IMR-90 (cell line): ENCODE measurements at regions of chr21 and their contacts with region 1.

Region 1: GRCh38 chr21:25607151-25608043 is at the start of gene MRPL39:
- DNase-seq: peak; percentile 88
- ATAC-seq: peak; percentile 98
- H3K4me3 ChIP-seq: peak within 1 kb of the TSS; percentile 81
- H3K27ac ChIP-seq: peak within 1 kb of the TSS; percentile 70
- H3K4me1 ChIP-seq: no peaks in the 10 kb centered on the region
- H3K27me3 ChIP-seq: no peaks in the 10 kb centered on the region
- CTCF ChIP-seq: peak; percentile 68
- POLR2A ChIP-seq: peak; percentile 75
- RAD21 ChIP-seq: peak; percentile 50
- total RNA-seq, gene MRPL39: 20.6 and 40.0 TPM in 2 replicates

Region 2: GRCh38 chr21:25421327-25422028 is 185.9 kb before region 1 on chr21:
- CTCF ChIA-PET with region 1: no interaction called
- POLR2A ChIA-PET with region 1: no interaction called
- dilution Hi-C with region 1: no loop called
- in situ Hi-C with region 1: no loop called
- intact Hi-C with region 1: loop called (anchors 2 kb)
- DNase-seq: peak; percentile 68
- ATAC-seq: peak; percentile 87
- H3K4me3 ChIP-seq: no peak overlapping the region
- H3K27ac ChIP-seq: no peak overlapping the region
- H3K4me1 ChIP-seq: no peaks in the 10 kb centered on the region
- H3K27me3 ChIP-seq: peaks cover 4% of the 10 kb centered on the region
- CTCF ChIP-seq: peak; percentile 61
- POLR2A ChIP-seq: no peak
- RAD21 ChIP-seq: peak; percentile 64

Region 3: DNA sequence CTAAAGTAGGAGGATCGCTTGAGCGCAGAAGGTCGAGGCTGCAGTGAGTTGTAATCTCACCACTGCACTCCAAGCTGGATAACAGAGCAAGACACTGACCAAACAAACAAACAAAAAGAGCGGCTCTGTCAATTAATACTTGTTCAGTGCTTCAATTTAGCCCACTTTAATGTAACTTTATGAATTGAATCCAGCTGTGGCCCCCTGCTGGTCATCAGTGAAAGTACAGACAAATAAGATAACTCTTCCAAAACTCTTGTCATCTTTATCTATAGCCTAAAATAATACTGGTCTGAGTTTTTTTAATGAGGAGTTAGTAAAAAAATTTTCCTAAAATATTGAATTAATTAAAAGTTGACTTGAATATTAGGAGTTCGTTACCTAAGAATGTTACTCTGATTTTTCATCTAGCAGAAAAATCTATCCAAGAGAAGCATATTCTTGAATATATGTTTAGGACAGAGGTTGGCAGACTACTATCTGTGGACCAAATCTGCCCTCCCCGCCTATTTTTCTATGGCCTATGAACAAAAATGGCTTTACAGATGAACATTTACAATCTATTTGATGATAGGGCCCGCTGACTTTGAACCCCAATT is 101.2 kb after region 1 on chr21:
- CTCF ChIA-PET with region 1: interaction called, 3 read pairs
- POLR2A ChIA-PET with region 1: no interaction called
- dilution Hi-C with region 1: no loop called
- in situ Hi-C with region 1: loop called (anchors 5 kb)
- intact Hi-C with region 1: loop called (anchors 1 kb)
- DNase-seq: peak; percentile 56
- ATAC-seq: peak; percentile 72
- H3K4me3 ChIP-seq: no peak overlapping the region
- H3K27ac ChIP-seq: no peak overlapping the region
- H3K4me1 ChIP-seq: no peaks in the 10 kb centered on the region
- H3K27me3 ChIP-seq: no peaks in the 10 kb centered on the region
- CTCF ChIP-seq: peak; percentile 73
- POLR2A ChIP-seq: no peak
- RAD21 ChIP-seq: peak; percentile 58

Region 4: DNA sequence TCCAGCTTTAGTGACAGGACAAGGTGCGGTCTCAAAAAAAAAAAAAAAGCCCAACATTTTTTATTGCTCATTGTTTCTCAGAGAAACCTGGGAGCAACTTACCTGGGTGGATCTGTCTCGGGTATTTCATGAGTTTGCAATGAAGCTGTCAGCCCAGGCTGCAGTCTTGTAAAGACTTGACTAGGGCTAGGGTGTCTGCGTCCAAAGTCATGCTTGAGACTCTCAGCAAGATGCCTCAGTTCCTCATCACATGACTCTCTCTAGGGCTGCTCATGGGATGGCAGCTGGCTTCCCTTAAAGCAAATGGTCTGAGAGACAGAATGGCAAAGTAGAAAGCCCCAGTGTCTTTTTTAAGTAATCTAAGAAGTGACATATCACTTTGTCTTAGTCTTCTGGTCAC is 135.5 kb after region 1 on chr21:
- CTCF ChIA-PET with region 1: no interaction called
- POLR2A ChIA-PET with region 1: no interaction called
- dilution Hi-C with region 1: no loop called
- in situ Hi-C with region 1: no loop called
- intact Hi-C with region 1: no loop called
- DNase-seq: no peak
- ATAC-seq: no peak
- H3K4me3 ChIP-seq: no peak overlapping the region
- H3K27ac ChIP-seq: no peak overlapping the region
- H3K4me1 ChIP-seq: no peaks in the 10 kb centered on the region
- H3K27me3 ChIP-seq: no peaks in the 10 kb centered on the region
- CTCF ChIP-seq: no peak
- POLR2A ChIP-seq: no peak
- RAD21 ChIP-seq: no peak

Region 5: DNA sequence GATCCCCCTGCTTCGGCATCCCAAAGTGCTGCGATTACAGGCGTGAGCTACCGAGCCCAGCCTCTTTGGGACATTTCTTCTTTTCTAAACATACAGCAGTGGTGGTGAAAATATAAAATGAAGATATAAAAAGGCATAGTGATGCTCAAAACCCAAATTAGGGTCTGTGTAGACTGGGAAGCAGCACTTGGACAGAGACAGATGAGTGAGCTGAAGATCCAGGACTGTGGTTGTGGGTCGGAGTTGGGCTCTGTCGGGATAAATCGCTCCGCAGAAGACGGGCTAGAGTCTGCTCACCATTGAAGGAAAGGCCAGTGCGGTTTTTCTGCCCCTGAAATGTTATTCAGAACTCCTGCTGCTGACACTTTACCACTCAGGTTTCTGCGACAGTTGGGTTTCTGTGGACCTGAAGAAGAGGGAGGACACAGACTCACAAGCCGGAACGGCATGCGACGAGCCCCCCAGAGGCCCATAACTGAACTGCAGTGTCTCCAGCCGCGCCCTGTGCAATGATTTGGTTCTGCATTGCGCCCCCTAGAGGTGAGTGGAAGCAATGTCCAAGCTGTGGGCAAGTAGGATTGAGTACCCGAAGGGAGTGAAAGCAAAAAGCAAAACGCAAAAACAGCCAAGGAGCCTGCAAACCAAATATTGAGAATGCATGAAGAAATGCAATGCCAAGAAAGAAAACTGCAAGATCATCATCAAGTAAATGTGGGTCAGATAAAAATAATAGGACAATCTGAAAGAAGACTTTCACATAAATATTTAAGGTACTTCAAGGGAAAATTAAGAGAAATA is 194.0 kb after region 1 on chr21:
- CTCF ChIA-PET with region 1: no interaction called
- POLR2A ChIA-PET with region 1: no interaction called
- dilution Hi-C with region 1: no loop called
- in situ Hi-C with region 1: no loop called
- intact Hi-C with region 1: loop called (anchors 5 kb)
- DNase-seq: peak; percentile 76
- ATAC-seq: peak; percentile 100
- H3K4me3 ChIP-seq: peak overlapping the region; percentile 3; the same call in 1 of the 2 replicates
- H3K27ac ChIP-seq: no peak overlapping the region
- H3K4me1 ChIP-seq: no peaks in the 10 kb centered on the region
- H3K27me3 ChIP-seq: peaks cover 3% of the 10 kb centered on the region; the same call in 1 of the 2 replicates
- CTCF ChIP-seq: peak; percentile 98
- POLR2A ChIP-seq: no peak
- RAD21 ChIP-seq: peak; percentile 55

Region 6: DNA sequence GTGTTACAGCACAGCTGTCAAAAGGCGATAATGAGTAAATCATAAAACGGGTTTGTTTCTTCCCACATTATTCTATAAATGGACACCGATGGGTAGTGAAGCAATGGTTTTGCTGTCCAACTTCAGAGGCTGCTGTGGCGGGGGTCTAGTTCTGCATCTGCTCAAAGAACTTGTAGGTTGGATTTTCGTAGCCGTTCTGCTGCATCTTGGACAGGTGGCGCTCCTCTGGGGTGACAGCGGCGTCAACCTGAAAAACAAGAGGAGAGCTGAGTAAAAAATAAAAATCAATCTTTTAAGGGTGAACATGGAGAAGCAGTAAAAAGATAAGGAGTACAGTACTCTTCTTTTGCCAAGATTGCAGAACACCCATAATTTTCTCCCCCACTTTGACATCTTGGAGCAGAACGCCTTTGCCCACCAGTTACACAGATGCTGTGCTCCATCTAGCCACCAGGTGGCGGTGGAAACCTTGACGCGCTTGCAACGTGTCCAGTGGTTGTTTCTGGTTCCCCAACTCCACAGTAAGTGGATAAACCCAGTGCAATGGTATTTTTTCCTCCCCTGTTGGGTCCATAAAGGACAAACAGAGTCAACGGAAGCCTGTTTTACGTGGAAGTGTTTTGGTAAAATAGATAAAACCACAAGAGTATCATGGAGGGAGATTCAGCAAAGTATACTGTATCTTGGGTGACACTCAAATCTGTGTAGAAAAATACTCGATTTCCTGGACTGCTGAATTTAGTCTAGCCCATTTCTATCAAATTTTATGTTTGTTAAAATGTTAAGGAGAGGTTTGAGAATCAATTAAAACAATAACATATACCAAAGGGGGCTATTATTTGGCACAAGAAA is 274.4 kb after region 1 on chr21:
- CTCF ChIA-PET with region 1: no interaction called
- POLR2A ChIA-PET with region 1: no interaction called
- dilution Hi-C with region 1: no loop called
- in situ Hi-C with region 1: no loop called
- intact Hi-C with region 1: loop called (anchors 5 kb)
- DNase-seq: peak; percentile 61
- ATAC-seq: peak; percentile 87
- H3K4me3 ChIP-seq: no peak overlapping the region
- H3K27ac ChIP-seq: no peak overlapping the region
- H3K4me1 ChIP-seq: no peaks in the 10 kb centered on the region
- H3K27me3 ChIP-seq: no peaks in the 10 kb centered on the region
- CTCF ChIP-seq: peak; percentile 86
- POLR2A ChIP-seq: no peak
- RAD21 ChIP-seq: peak; percentile 79

Region 7: GRCh38 chr21:26177187-26177586 is 569.8 kb after region 1 on chr21:
- CTCF ChIA-PET with region 1: no interaction called
- POLR2A ChIA-PET with region 1: no interaction called
- dilution Hi-C with region 1: no loop called
- in situ Hi-C with region 1: loop called (anchors 25 kb)
- intact Hi-C with region 1: no loop called
- DNase-seq: no peak
- ATAC-seq: no peak
- H3K4me3 ChIP-seq: no peak overlapping the region
- H3K27ac ChIP-seq: no peak overlapping the region
- H3K4me1 ChIP-seq: no peaks in the 10 kb centered on the region
- H3K27me3 ChIP-seq: no peaks in the 10 kb centered on the region
- CTCF ChIP-seq: no peak
- POLR2A ChIP-seq: no peak
- RAD21 ChIP-seq: no peak